ENCODE measurements at regions of chr15 and their contacts with region 1.

Region 1: DNA sequence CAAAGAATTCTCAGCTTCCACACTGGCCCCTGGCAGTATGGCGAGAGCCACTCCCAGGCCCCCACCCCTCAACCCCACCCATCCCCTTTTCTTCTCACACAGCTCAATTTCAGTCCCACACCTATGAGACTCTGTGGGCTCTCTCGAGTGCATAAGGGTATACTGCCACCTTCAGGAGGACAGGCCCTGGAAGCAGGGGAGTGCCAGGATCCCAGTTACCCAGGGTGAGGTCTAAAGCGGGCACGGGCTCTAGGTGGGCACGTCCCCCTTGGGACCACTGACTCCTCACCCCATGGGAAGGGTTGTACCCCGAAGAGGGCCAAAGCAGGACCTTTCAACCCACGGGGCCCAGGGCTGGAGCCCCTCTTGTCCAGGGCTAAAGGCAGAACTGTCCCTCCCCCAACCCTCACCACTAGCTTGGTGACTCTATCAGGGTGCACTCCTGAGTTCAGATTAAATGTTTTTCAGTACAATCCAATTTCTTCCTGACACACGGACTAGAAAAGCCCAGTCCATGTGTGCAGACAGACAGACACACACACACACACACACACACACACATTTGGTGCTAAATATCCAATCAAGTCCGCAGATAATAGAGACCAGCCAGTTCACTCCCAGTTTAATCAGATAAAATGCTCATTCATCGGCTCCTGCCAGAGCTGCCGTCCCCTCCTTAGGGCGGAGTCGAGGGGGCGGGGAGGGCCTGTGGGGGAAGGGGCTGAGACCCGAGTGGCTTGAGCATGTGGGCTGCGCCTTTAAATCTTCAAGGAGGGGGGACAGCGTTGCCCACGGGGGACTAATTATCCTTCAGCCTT is 59.4 kb downstream of the CYP11A1 start:
- DNase-seq: peak; percentile 43
- ATAC-seq: peak; percentile 85

Region 2: DNA sequence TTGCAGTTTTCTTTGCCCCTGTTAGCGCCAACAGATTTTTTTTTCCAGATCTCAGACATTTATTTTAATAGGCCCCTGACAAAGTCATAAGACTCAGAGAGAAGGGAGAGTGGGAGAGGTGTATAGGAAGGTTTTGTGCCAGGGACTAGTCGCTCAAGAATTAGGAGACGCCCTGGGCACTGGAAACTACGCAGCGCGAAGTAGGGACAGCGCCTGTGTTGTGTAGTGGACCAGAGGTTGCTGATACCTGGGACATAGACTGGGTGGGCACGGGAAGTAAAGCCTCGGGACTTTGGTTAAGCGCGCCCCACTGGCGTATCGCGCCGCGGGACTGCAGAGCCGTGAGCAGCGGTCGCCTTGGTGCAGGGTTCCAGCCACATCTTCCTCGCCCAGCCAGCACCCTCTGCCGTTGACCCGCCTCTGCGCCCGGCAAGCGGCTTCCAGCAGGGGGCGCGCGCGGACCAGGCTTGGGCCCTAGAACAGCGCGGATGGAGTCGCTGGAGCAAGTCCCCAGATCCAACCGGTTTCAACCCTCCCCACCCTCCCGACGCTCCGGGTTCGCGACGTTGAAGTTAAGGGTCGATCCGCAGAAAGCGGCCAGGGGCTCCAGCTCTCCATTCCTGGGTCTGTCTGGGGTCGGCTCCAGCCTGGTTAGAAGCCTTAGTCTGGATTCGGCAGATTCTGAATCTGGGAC is 180.6 kb before region 1 on chr15:
- intact Hi-C with region 1: loop called (anchors 5 kb)
- DNase-seq: peak; percentile 95
- ATAC-seq: peak; percentile 97